Activated CD4-positive, alpha-beta T cell treated with anti-CD3 and anti-CD28 coated beads for 36 hours (primary cell): ENCODE measurements at regions of chr12 and their contacts with region 1.

Region 1: GRCh38 chr12:57063991-57064685 is 14.2 kb upstream of the MYO1A start:
- DNase-seq: peak; percentile 80
- ATAC-seq: peak; percentile 79
- H3K4me3 Mint-ChIP-seq: peak overlapping the region; percentile 76
- H3K27ac Mint-ChIP-seq: peak overlapping the region; percentile 98
- H3K4me1 Mint-ChIP-seq: peaks cover 66% of the 10 kb centered on the region
- H3K27me3 Mint-ChIP-seq: no peaks in the 10 kb centered on the region

Region 2: DNA sequence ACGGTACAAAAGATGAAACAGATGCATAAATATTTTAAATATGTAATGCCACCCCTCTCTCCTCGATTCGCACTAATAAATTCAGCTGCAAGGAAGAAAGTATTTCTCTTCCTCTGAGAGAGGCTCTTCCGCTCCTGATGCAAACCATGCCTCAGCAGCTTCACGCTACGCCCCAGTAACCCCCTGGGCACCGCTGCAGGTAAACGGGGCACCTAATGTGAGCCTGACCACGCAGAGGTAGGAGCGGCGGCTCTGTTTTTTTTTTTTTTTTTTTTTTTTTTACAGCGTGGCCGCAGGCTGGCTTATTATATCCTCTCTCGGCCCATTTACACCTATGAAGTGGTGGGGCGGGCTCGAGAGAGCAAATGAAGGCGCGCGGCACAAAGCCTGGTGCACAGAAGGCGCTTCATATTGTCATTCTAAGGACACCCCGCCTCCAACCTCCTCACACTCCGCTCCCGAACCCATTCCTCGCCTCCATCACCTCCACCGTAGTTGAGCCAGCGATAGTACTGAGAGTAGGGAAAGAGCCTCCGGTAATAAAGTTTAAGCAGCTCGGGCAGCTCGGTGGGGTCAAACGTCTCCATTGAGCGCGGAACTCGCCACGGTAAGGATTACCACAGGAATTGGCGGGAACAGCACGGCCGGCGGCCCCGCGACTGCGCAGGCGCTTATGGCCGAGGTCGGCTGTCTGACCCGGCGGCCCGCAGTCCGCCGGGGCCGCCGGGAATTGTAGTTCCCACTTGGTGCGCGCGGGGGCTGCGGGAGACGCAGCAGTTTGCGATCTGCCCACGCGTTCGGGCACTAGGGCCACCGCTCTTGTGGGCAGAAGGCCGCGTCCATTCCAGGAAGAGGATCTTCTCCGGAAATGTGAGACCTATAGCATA is 312.2 kb before region 1 on chr12 and contains the start of gene PRIM1:
- CTCF ChIA-PET with region 1: interaction called, 6 read pairs
- POLR2A ChIA-PET with region 1: no interaction called
- intact Hi-C with region 1: loop called (anchors 1 to 2 kb)
- DNase-seq: peak; percentile 95
- ATAC-seq: peak; percentile 91
- H3K4me3 Mint-ChIP-seq: peak within 1 kb of the TSS; percentile 84
- H3K27ac Mint-ChIP-seq: peak within 1 kb of the TSS; percentile 99
- H3K4me1 Mint-ChIP-seq: peaks cover 32% of the 10 kb centered on the region
- H3K27me3 Mint-ChIP-seq: no peaks in the 10 kb centered on the region
- total RNA-seq, gene PRIM1: 81.3 to 83.7 TPM

Region 3: GRCh38 chr12:57012600-57013465 is 51.3 kb before region 1 on chr12:
- CTCF ChIA-PET with region 1: interaction called, 207 read pairs
- POLR2A ChIA-PET with region 1: no interaction called
- intact Hi-C with region 1: loop called (anchors 1 kb)
- DNase-seq: no peak
- ATAC-seq: no peak
- H3K4me3 Mint-ChIP-seq: no peak overlapping the region
- H3K27ac Mint-ChIP-seq: peak overlapping the region; percentile 56
- H3K4me1 Mint-ChIP-seq: peaks cover 41% of the 10 kb centered on the region
- H3K27me3 Mint-ChIP-seq: no peaks in the 10 kb centered on the region

Region 4: DNA sequence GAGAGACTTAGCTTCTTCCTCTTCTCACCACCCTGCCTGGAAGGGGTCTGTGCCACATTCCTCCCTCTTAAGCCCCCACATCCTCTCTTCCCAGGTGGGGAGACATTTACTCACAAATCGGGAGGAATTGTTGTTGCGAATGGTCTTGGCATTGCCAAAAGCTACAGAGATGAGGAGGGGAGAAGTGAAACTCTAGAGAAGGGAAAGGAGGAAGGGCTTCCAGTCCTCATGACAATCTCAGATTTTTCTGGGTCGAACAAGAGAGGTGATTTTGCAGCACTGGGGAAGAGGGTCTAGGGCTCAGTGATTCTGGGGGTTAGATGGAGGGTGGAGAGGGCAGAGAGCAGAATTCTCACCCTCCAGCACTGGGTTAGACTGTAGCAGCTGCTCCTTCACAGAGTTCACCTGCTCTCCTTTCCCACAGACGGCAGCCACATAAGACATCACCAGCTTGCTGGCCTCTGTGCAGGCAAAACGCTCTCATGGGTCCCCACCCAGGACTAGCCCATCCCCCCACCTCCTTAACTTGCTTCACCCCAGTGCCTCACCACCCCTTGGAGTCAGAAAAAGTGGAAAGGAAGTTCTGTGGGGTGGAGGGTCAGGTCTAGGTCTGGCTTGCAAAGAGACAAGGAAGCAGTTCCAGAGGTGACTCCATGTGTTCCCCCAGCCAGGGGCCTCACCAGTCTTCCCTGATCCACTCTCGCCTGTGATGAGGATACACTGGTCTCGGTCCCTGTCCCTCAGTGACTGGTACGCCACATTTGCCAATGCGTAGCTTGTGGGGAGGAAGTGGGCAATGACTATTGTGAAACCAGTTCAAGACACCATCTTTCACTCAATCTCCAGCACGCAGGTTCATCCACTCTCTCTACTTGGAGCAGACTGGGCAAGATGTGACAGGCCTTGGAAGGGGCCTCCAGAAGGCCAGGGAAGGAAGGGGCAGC is 16.9 kb before region 1 on chr12:
- CTCF ChIA-PET with region 1: interaction called, 41 read pairs
- POLR2A ChIA-PET with region 1: no interaction called
- intact Hi-C with region 1: no loop called
- DNase-seq: peak; percentile 78
- ATAC-seq: peak; percentile 94
- H3K4me3 Mint-ChIP-seq: peak overlapping the region; percentile 22
- H3K27ac Mint-ChIP-seq: peak overlapping the region; percentile 85
- H3K4me1 Mint-ChIP-seq: peaks cover 32% of the 10 kb centered on the region
- H3K27me3 Mint-ChIP-seq: no peaks in the 10 kb centered on the region

Region 5: DNA sequence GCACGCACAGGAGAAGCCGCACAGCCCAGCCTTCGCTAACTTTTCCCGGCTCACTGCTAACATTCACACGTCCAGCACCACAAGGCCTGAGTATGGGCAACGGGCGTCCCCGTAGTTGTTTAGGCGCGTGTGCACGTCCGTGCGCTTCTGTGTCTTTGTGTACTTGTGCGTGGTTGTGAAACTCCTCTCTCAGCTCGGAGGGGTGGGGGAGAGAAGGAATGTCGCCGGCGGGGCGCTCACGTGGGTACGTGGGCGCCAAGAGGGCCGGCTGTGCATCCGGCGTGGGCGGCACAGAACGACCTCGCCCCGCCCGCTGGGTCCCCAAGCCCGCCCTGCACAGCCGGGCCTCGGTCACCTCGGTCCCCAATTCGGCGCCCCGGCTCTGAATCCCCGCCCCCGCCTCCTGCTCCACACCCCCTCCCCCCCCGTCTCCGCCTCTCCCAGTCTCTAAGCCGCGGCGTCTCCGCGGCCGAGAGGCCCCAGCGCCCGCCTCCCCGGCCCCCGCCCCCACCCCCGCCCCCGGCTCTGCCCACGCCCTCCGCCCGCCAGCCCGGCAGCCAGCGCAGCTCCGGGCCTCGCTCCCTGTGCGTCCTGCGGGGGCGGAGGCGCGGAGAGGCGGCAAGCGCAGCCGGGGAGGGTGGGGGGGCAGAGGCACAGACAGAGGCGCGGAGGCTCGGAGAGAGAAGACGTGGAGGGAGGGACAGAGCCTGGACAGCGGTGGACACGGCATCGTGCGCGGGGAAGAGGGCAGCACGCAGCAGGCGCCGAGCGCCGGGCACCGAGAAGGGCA is 24.5 kb after region 1 on chr12 and contains the start of gene NAB2:
- CTCF ChIA-PET with region 1: interaction called, 411 read pairs
- POLR2A ChIA-PET with region 1: interaction called, 5 read pairs
- intact Hi-C with region 1: loop called (anchors 1 kb)
- DNase-seq: peak; percentile 95
- ATAC-seq: peak; percentile 49
- H3K4me3 Mint-ChIP-seq: peak within 1 kb of the TSS; percentile 93
- H3K27ac Mint-ChIP-seq: peak within 1 kb of the TSS; percentile 95
- H3K4me1 Mint-ChIP-seq: peaks cover 63% of the 10 kb centered on the region
- H3K27me3 Mint-ChIP-seq: no peaks in the 10 kb centered on the region
- total RNA-seq, gene NAB2: 46.8 to 48.6 TPM